ENCODE measurements at regions of chr10 and their contacts with region 1.

Region 1: GRCh38 chr10:69914398-69915214 is 112.9 kb downstream of the COL13A1 start:
- DNase-seq: peak; percentile 58
- H3K4me3 ChIP-seq: no peak overlapping the region
- H3K27ac ChIP-seq: no peak overlapping the region
- H3K4me1 ChIP-seq: peaks cover 17% of the 10 kb centered on the region
- H3K27me3 ChIP-seq: no peaks in the 10 kb centered on the region
- CTCF ChIP-seq: peak; percentile 93 to 96
- POLR2A ChIP-seq: no peak

Region 2: GRCh38 chr10:69644658-69645295 is 269.8 kb before region 1 on chr10:
- CTCF ChIA-PET with region 1: interaction called, 46 read pairs
- POLR2A ChIA-PET with region 1: no interaction called
- dilution Hi-C with region 1: no loop called
- intact Hi-C with region 1: loop called (anchors 1 kb)
- DNase-seq: peak; percentile 49
- H3K4me3 ChIP-seq: no peak overlapping the region
- H3K27ac ChIP-seq: no peak overlapping the region
- H3K4me1 ChIP-seq: no peaks in the 10 kb centered on the region
- H3K27me3 ChIP-seq: peaks cover 2 to 3% of the 10 kb centered on the region in 2 experiments
- CTCF ChIP-seq: peak; percentile 84 to 86
- POLR2A ChIP-seq: no peak

Region 3: DNA sequence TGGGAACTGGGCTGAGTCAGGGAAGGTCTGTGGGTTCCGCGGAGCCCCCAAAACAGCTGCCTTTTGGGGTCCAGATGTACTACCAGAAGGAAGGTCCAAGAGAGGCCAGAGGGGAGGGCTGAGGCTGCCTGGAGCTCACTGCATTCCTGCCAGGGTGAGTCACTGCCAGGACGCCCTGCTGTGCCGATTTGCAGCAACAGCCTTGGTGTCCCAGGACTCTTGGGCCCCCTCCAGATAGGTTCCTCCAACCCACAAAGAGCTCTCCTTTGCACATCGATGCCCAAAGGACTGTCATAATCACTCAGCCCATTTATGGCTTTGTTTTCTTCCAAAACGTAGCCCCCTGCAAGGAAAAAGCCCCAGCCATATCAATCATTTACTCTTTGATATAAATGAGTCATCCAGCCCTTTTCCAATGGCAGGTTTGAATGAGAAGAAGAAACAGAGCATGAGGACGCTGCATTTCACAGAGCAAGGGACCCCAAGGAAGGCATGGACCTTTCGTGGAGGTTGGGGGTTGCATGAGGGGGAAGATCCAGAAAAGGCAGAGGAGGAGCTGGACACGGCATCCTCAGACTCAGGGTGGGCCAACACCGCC is 145.1 kb before region 1 on chr10:
- CTCF ChIA-PET with region 1: interaction called, 24 read pairs
- POLR2A ChIA-PET with region 1: no interaction called
- dilution Hi-C with region 1: no loop called
- intact Hi-C with region 1: no loop called
- DNase-seq: peak; percentile 60
- H3K4me3 ChIP-seq: no peak overlapping the region
- H3K27ac ChIP-seq: no peak overlapping the region
- H3K4me1 ChIP-seq: peaks cover 13% of the 10 kb centered on the region
- H3K27me3 ChIP-seq: peaks cover 0 to 3% of the 10 kb centered on the region in 2 experiments
- CTCF ChIP-seq: no peak
- POLR2A ChIP-seq: no peak

Region 4: GRCh38 chr10:69807122-69807521 is 107.5 kb before region 1 on chr10:
- CTCF ChIA-PET with region 1: interaction called, 92 read pairs
- POLR2A ChIA-PET with region 1: no interaction called
- dilution Hi-C with region 1: no loop called
- intact Hi-C with region 1: no loop called
- DNase-seq: peak; percentile 30
- H3K4me3 ChIP-seq: no peak overlapping the region
- H3K27ac ChIP-seq: peak overlapping the region; percentile 72
- H3K4me1 ChIP-seq: peaks cover 43% of the 10 kb centered on the region
- H3K27me3 ChIP-seq: no peaks in the 10 kb centered on the region
- CTCF ChIP-seq: no peak
- POLR2A ChIP-seq: no peak

Region 5: DNA sequence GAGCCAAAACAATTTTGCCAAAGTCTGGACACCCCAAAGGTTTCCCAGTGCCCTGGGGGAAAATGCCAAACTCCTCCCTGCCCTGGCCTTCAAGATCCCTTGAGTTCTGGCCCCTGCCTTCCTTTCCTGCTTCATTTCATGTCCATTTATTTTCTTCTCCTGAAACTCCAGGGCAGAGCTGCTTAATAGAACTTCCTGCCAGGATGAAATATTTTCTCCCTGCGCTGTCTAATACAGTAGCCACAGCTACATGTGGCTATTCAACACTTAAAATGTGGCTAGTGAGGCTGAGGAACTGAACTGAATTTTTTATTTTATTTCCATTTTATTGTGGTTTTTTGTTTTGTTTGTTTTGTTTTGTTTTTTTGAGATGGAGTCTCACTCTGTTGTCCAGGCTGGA is 63.3 kb before region 1 on chr10:
- CTCF ChIA-PET with region 1: interaction called, 14 read pairs
- POLR2A ChIA-PET with region 1: no interaction called
- dilution Hi-C with region 1: no loop called
- intact Hi-C with region 1: no loop called
- DNase-seq: no peak
- H3K4me3 ChIP-seq: no peak overlapping the region
- H3K27ac ChIP-seq: no peak overlapping the region
- H3K4me1 ChIP-seq: peaks cover 22% of the 10 kb centered on the region
- H3K27me3 ChIP-seq: no peaks in the 10 kb centered on the region
- CTCF ChIP-seq: no peak
- POLR2A ChIP-seq: no peak

Region 6: GRCh38 chr10:69874449-69874848 is 40.2 kb before region 1 on chr10:
- CTCF ChIA-PET with region 1: interaction called, 25 read pairs
- POLR2A ChIA-PET with region 1: interaction called, 3 read pairs
- dilution Hi-C with region 1: no loop called
- intact Hi-C with region 1: no loop called
- DNase-seq: peak; percentile 42
- H3K4me3 ChIP-seq: no peak overlapping the region
- H3K27ac ChIP-seq: no peak overlapping the region
- H3K4me1 ChIP-seq: peaks cover 29% of the 10 kb centered on the region
- H3K27me3 ChIP-seq: no peaks in the 10 kb centered on the region
- CTCF ChIP-seq: no peak
- POLR2A ChIP-seq: no peak

Region 7: GRCh38 chr10:69936091-69936490 is 21.5 kb after region 1 on chr10:
- CTCF ChIA-PET with region 1: interaction called, 10 read pairs
- POLR2A ChIA-PET with region 1: no interaction called
- dilution Hi-C with region 1: no loop called
- intact Hi-C with region 1: no loop called
- DNase-seq: no peak
- H3K4me3 ChIP-seq: no peak overlapping the region
- H3K27ac ChIP-seq: no peak overlapping the region
- H3K4me1 ChIP-seq: no peaks in the 10 kb centered on the region
- H3K27me3 ChIP-seq: no peaks in the 10 kb centered on the region
- CTCF ChIP-seq: peak in 1 of 2 donors; percentile 14
- POLR2A ChIP-seq: no peak